MCF 10A (cell line): ENCODE measurements at regions of chr2 and their contacts with region 1.

Region 1: DNA sequence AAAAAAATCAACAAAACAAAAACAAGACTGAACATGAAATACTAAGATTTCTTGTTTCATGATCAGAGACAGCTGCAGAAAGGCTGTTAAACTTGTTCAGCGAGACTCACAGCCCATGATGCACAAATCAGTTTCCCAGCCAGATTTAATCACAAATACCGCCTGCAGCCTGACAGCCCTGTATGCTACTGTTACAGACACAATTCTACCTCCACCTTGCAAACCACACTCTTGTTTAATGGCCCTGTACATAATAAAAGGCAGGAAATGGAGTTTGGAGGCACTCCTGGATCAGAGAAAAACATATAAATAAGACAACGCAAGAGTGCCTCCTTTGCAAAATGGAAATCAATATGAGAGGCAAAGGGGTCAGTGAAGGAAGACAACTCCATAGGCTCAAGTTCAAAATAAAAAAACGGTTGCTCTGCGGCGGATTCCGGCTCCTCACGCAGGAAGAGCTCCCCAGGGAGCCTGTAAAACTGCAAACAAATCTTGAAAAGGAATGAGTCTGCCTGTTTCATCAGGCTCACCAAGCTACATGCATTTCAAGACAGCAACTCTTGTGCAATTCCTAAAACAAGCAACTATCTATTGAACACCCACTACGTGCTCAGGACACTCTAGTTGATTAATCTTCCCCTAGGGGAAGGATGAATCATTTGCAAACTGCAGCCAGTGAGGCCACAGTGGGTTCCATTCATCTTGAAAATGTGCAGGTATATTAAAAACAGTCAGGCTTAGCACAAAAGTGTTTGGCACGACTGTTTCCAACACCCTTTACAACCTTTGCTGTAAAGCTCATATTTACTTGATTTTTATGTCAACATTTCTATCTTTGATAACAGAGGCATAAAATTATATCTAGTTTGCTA is 37.5 kb downstream of the TBC1D8 start:
- DNase-seq: peak; percentile 95
- H3K4me3 Mint-ChIP-seq: peak overlapping the region; percentile 67
- H3K27ac Mint-ChIP-seq: peak overlapping the region; percentile 90
- H3K4me1 Mint-ChIP-seq: peaks cover 47% of the 10 kb centered on the region
- H3K27me3 Mint-ChIP-seq: no peaks in the 10 kb centered on the region
- CTCF ChIP-seq: no peak

Region 2: DNA sequence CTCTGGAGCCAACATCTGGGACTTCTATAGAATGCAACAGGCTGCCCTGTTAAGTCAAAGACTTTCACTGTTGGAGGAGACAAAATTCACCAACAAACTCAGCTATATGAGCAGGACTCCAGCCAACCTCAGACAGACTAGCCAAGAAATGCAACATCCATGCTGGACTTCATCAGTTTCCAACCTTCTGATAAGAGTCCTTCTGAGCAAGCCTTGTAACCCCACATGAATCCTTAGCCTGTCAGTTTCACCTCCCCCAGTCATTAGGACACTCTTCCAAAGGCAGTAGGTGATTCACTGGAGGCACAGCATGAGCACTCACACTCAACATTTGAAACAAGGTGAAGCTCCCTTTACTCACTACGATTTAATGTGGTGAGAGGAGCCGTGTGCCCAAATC is 31.8 kb after region 1 on chr2:
- CTCF ChIA-PET with region 1: no interaction called
- POLR2A ChIA-PET with region 1: interaction called, 275 read pairs
- intact Hi-C with region 1: loop called (anchors 5 kb)
- DNase-seq: peak; percentile 71
- H3K4me3 Mint-ChIP-seq: peak overlapping the region; percentile 56
- H3K27ac Mint-ChIP-seq: peak overlapping the region; percentile 61
- H3K4me1 Mint-ChIP-seq: peaks cover 77% of the 10 kb centered on the region
- H3K27me3 Mint-ChIP-seq: no peaks in the 10 kb centered on the region
- CTCF ChIP-seq: no peak

Region 3: GRCh38 chr2:101255501-101255900 is 141.9 kb after region 1 on chr2:
- CTCF ChIA-PET with region 1: no interaction called
- POLR2A ChIA-PET with region 1: no interaction called
- intact Hi-C with region 1: no loop called
- DNase-seq: peak; percentile 29
- H3K4me3 Mint-ChIP-seq: peak overlapping the region; percentile 13
- H3K27ac Mint-ChIP-seq: peak overlapping the region; percentile 5
- H3K4me1 Mint-ChIP-seq: peaks cover 27% of the 10 kb centered on the region
- H3K27me3 Mint-ChIP-seq: no peaks in the 10 kb centered on the region
- CTCF ChIP-seq: no peak